Mammary epithelial cell (primary cell): ENCODE measurements at regions of chr3 and their contacts with region 1.

Region 1: DNA sequence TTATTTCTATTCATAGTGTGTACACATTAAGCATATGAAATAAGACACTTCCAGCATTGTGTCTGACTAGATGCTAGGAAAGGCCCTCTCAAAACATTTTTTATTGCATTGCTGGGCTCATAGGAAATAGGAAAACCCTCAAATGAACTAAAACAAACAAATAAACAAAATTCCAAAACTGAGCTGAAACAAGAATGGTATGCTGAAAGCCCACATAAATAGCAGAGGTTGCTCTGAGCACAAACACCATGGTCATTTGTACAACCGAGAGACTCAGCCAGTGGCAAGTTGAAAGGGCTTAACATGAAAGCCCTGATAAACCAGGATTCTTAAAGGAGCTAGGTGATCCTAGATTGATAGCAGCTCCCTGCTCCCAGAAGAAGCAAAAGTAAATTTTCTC is 310.0 kb upstream of the WNT5A start:
- DNase-seq: no peak
- H3K4me3 ChIP-seq: no peak overlapping the region
- H3K27ac ChIP-seq: no peak overlapping the region
- H3K4me1 ChIP-seq: no peaks in the 10 kb centered on the region
- H3K27me3 ChIP-seq: no peaks in the 10 kb centered on the region
- CTCF ChIP-seq: no peak

Region 2: GRCh38 chr3:55765906-55766701 is 31.0 kb before region 1 on chr3:
- CTCF ChIA-PET with region 1: no interaction called
- dilution Hi-C with region 1: no loop called
- in situ Hi-C with region 1: no loop called
- intact Hi-C with region 1: loop called (anchors 1 kb)
- DNase-seq: no peak
- H3K4me3 ChIP-seq: no peak overlapping the region
- H3K27ac ChIP-seq: no peak overlapping the region
- H3K4me1 ChIP-seq: no peaks in the 10 kb centered on the region
- H3K27me3 ChIP-seq: peaks cover 2% of the 10 kb centered on the region
- CTCF ChIP-seq: no peak

Region 3: DNA sequence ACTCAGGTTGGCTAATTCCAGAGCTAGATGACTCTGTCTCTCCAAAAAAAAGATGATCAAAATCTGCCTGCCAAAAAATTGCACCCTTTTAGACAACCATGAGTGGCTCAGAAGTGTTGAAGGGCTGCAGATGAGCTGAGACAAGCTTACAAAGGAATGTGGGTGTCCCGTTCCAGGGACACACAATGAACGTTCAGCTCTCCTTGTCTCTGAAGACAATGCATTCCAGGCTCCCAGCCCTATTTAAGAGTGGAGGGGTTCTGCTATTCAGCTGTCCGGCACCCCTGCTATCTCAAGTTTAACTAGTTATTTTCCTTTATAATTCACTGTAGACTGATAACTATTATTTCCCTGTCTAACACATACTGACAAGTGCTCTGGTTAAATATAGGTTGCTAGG is 45.1 kb after region 1 on chr3:
- CTCF ChIA-PET with region 1: no interaction called
- dilution Hi-C with region 1: no loop called
- in situ Hi-C with region 1: no loop called
- intact Hi-C with region 1: no loop called
- DNase-seq: no peak
- H3K4me3 ChIP-seq: no peak overlapping the region
- H3K27ac ChIP-seq: no peak overlapping the region
- H3K4me1 ChIP-seq: no peaks in the 10 kb centered on the region
- H3K27me3 ChIP-seq: no peaks in the 10 kb centered on the region
- CTCF ChIP-seq: no peak

Region 4: GRCh38 chr3:55906896-55907295 is 109.8 kb after region 1 on chr3:
- CTCF ChIA-PET with region 1: no interaction called
- dilution Hi-C with region 1: no loop called
- in situ Hi-C with region 1: no loop called
- intact Hi-C with region 1: no loop called
- DNase-seq: peak; percentile 32
- H3K4me3 ChIP-seq: no peak overlapping the region
- H3K27ac ChIP-seq: no peak overlapping the region
- H3K4me1 ChIP-seq: no peaks in the 10 kb centered on the region
- H3K27me3 ChIP-seq: no peaks in the 10 kb centered on the region
- CTCF ChIP-seq: no peak